Activated CD8-positive, alpha-beta memory T cell treated with anti-CD3 and anti-CD28 coated beads, Interleukin-2, amount 10 ng/mL, durations not matched to agents 7 days and 5 days (primary cell): ENCODE measurements at regions of chrX and their contacts with region 1.

Region 1: GRCh38 chrX:12984629-12985319 is 9.9 kb downstream of the TMSB4X start:
- DNase-seq: peak; percentile 76
- ATAC-seq: peak; percentile 80
- H3K4me3 Mint-ChIP-seq: peak overlapping the region; percentile 45
- H3K27ac Mint-ChIP-seq: peak overlapping the region; percentile 97
- H3K4me1 Mint-ChIP-seq: peaks cover 65% of the 10 kb centered on the region
- H3K27me3 Mint-ChIP-seq: no peaks in the 10 kb centered on the region

Region 2: GRCh38 chrX:12595720-12596119 is 389.1 kb before region 1 on chrX:
- CTCF ChIA-PET with region 1: no interaction called
- DNase-seq: no peak
- ATAC-seq: no peak
- H3K4me3 Mint-ChIP-seq: no peak overlapping the region
- H3K27ac Mint-ChIP-seq: no peak overlapping the region
- H3K4me1 Mint-ChIP-seq: no peaks in the 10 kb centered on the region
- H3K27me3 Mint-ChIP-seq: no peaks in the 10 kb centered on the region

Region 3: GRCh38 chrX:12970691-12971202 is 14.0 kb before region 1 on chrX:
- CTCF ChIA-PET with region 1: no interaction called
- DNase-seq: peak; percentile 73
- ATAC-seq: peak; percentile 17
- H3K4me3 Mint-ChIP-seq: peak overlapping the region; percentile 95
- H3K27ac Mint-ChIP-seq: peak overlapping the region; percentile 96
- H3K4me1 Mint-ChIP-seq: peaks cover 53% of the 10 kb centered on the region
- H3K27me3 Mint-ChIP-seq: no peaks in the 10 kb centered on the region

Region 4: GRCh38 chrX:13000301-13000811 is 15.6 kb after region 1 on chrX:
- CTCF ChIA-PET with region 1: interaction called, 17 read pairs
- DNase-seq: peak; percentile 54
- ATAC-seq: peak; percentile 60
- H3K4me3 Mint-ChIP-seq: peak overlapping the region; percentile 73
- H3K27ac Mint-ChIP-seq: peak overlapping the region; percentile 97
- H3K4me1 Mint-ChIP-seq: peaks cover 76% of the 10 kb centered on the region
- H3K27me3 Mint-ChIP-seq: no peaks in the 10 kb centered on the region